ENCODE measurements at regions of chr11 and their contacts with region 1.

Region 1: DNA sequence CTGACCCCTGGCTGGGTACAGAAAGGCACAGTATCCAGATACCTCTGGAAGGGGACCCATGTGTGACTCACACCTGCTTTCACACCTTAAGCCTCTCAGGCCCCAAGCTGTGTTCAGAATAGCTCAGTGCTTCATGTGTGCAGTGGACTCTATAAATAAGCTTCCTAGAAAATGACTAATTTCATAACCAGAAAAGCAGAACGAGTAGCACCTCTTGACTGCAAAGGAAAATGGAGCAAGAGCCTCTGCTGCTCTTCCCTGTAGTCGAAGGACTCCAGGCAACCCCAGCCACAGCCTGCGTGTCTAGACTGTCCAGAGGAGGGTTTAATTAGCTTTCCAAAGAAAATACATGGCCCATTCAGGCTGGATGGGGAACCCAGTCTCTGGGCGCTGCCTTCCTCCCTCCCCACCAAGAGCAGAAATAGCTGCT is 23.1 kb downstream of the PTPN5 start:
- DNase-seq: no peak
- H3K4me3 ChIP-seq: no peak overlapping the region
- H3K4me3 Mint-ChIP-seq: no peak overlapping the region
- H3K27ac ChIP-seq: no peak overlapping the region
- H3K27ac Mint-ChIP-seq: no peak overlapping the region
- H3K4me1 ChIP-seq: peaks cover 5% of the 10 kb centered on the region
- H3K4me1 Mint-ChIP-seq: peaks cover 4 to 5% (median 4%) of the 10 kb centered on the region in 4 donors
- H3K27me3 ChIP-seq: no peaks in the 10 kb centered on the region
- H3K27me3 Mint-ChIP-seq: peaks cover 8% of the 10 kb centered on the region in 2 donors

Region 2: GRCh38 chr11:17991783-17992433 is 776.6 kb before region 1 on chr11:
- CTCF ChIA-PET with region 1: no interaction called
- POLR2A ChIA-PET with region 1: no interaction called
- intact Hi-C with region 1: loop called (anchors 2 kb)
- DNase-seq: peak; percentile 43 to 55 (median 47)
- H3K4me3 ChIP-seq: no peak overlapping the region
- H3K4me3 Mint-ChIP-seq: no peak overlapping the region
- H3K27ac ChIP-seq: no peak overlapping the region
- H3K27ac Mint-ChIP-seq: peak overlapping the region in 2 of 7 donors; percentile 60 to 65
- H3K4me1 ChIP-seq: no peaks in the 10 kb centered on the region
- H3K4me1 Mint-ChIP-seq: peaks cover 0 to 2% (median under 1%) of the 10 kb centered on the region in 4 donors
- H3K27me3 ChIP-seq: no peaks in the 10 kb centered on the region
- H3K27me3 Mint-ChIP-seq: no peaks in the 10 kb centered on the region

Region 3: GRCh38 chr11:18171377-18172000 is 597.0 kb before region 1 on chr11:
- CTCF ChIA-PET with region 1: no interaction called
- POLR2A ChIA-PET with region 1: no interaction called
- intact Hi-C with region 1: loop called (anchors 1 kb)
- DNase-seq: peak in 1 of 5 donors; percentile 1
- H3K4me3 ChIP-seq: no peak overlapping the region
- H3K4me3 Mint-ChIP-seq: no peak overlapping the region
- H3K27ac ChIP-seq: no peak overlapping the region
- H3K27ac Mint-ChIP-seq: no peak overlapping the region
- H3K4me1 ChIP-seq: no peaks in the 10 kb centered on the region
- H3K4me1 Mint-ChIP-seq: no peaks in the 10 kb centered on the region
- H3K27me3 ChIP-seq: no peaks in the 10 kb centered on the region
- H3K27me3 Mint-ChIP-seq: peaks cover 11 to 15% of the 10 kb centered on the region in 2 donors

Region 4: GRCh38 chr11:18243783-18244362 is 524.6 kb before region 1 on chr11:
- CTCF ChIA-PET with region 1: interaction called, 5 read pairs
- POLR2A ChIA-PET with region 1: no interaction called
- intact Hi-C with region 1: loop called (anchors 10 kb)
- DNase-seq: peak; percentile 71 to 79 (median 73)
- H3K4me3 ChIP-seq: no peak overlapping the region
- H3K4me3 Mint-ChIP-seq: peak overlapping the region in 1 of 8 donors; percentile 46
- H3K27ac ChIP-seq: no peak overlapping the region
- H3K27ac Mint-ChIP-seq: peak overlapping the region in 6 of 7 donors; percentile 2 to 48 (median 24)
- H3K4me1 ChIP-seq: peaks cover 8% of the 10 kb centered on the region
- H3K4me1 Mint-ChIP-seq: peaks cover 10 to 27% (median 18%) of the 10 kb centered on the region in 4 donors
- H3K27me3 ChIP-seq: peaks cover 3% of the 10 kb centered on the region
- H3K27me3 Mint-ChIP-seq: peaks cover 8 to 9% of the 10 kb centered on the region in 2 donors

Region 5: GRCh38 chr11:18548001-18548400 is 220.5 kb before region 1 on chr11:
- CTCF ChIA-PET with region 1: no interaction called
- POLR2A ChIA-PET with region 1: no interaction called
- intact Hi-C with region 1: no loop called
- DNase-seq: no peak
- H3K4me3 ChIP-seq: no peak overlapping the region
- H3K4me3 Mint-ChIP-seq: no peak overlapping the region
- H3K27ac ChIP-seq: no peak overlapping the region
- H3K27ac Mint-ChIP-seq: no peak overlapping the region
- H3K4me1 ChIP-seq: no peaks in the 10 kb centered on the region
- H3K4me1 Mint-ChIP-seq: no peaks in the 10 kb centered on the region
- H3K27me3 ChIP-seq: no peaks in the 10 kb centered on the region
- H3K27me3 Mint-ChIP-seq: no peaks in the 10 kb centered on the region

Region 6: GRCh38 chr11:18677560-18677959 is 90.9 kb before region 1 on chr11:
- CTCF ChIA-PET with region 1: no interaction called
- POLR2A ChIA-PET with region 1: no interaction called
- intact Hi-C with region 1: no loop called
- DNase-seq: no peak
- H3K4me3 ChIP-seq: no peak overlapping the region
- H3K4me3 Mint-ChIP-seq: no peak overlapping the region
- H3K27ac ChIP-seq: no peak overlapping the region
- H3K27ac Mint-ChIP-seq: peak overlapping the region in 1 of 7 donors; percentile 41
- H3K4me1 ChIP-seq: peaks cover 9% of the 10 kb centered on the region
- H3K4me1 Mint-ChIP-seq: peaks cover 3 to 21% (median 9%) of the 10 kb centered on the region in 4 donors
- H3K27me3 ChIP-seq: no peaks in the 10 kb centered on the region
- H3K27me3 Mint-ChIP-seq: peaks cover 0 to 1% of the 10 kb centered on the region in 2 donors